Naive thymus-derived CD4-positive, alpha-beta T cell (primary cell): ENCODE measurements at regions of chr7 and their contacts with region 1.

Region 1: GRCh38 chr7:28329661-28330363 is 82.5 kb upstream of the CREB5 start:
- DNase-seq: peak in 7 of 9 donors; percentile 22 to 56 (median 42)
- ATAC-seq: peak; percentile 69
- H3K4me3 ChIP-seq: peak overlapping the region; percentile 15
- H3K4me3 Mint-ChIP-seq: peak overlapping the region; percentile 39 to 90 (median 82)
- H3K27ac ChIP-seq: peak overlapping the region; percentile 55
- H3K27ac Mint-ChIP-seq: peak overlapping the region; percentile 67 to 96 (median 91)
- H3K4me1 ChIP-seq: peaks cover 0 to 36% of the 10 kb centered on the region in 2 donors
- H3K4me1 Mint-ChIP-seq: peaks cover 18 to 47% (median 43%) of the 10 kb centered on the region in 7 donors
- H3K27me3 ChIP-seq: no peaks in the 10 kb centered on the region
- H3K27me3 Mint-ChIP-seq: peaks cover 0 to 4% (median 0%) of the 10 kb centered on the region in 5 donors

Region 2: DNA sequence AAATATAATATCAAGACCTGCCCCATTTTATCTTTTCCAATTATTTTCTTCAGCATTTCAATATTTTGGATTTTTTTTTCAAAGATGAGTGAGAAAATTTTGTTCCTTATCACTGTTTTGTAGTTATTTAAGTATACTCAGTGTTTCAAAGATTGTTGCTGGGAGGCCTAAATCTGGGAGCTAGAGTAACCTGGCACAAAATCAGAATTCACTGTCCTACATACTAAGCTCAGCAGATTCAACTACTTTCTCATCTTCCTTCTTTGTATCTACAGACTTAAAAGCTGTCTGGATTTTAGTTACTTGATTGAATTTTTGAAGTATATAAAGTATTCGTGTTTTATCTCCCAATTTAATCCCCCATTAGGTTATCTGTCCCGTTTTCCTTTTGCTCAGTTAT is 503.9 kb before region 1 on chr7:
- CTCF ChIA-PET with region 1: no interaction called
- POLR2A ChIA-PET with region 1: no interaction called
- intact Hi-C with region 1: no loop called
- DNase-seq: no peak
- ATAC-seq: no peak
- H3K4me3 ChIP-seq: no peak overlapping the region
- H3K4me3 Mint-ChIP-seq: no peak overlapping the region
- H3K27ac ChIP-seq: no peak overlapping the region
- H3K27ac Mint-ChIP-seq: peak overlapping the region in 2 of 9 donors; percentile 7 to 41
- H3K4me1 ChIP-seq: no peaks in the 10 kb centered on the region
- H3K4me1 Mint-ChIP-seq: peaks cover 0 to 4% (median 0%) of the 10 kb centered on the region in 7 donors
- H3K27me3 ChIP-seq: no peaks in the 10 kb centered on the region
- H3K27me3 Mint-ChIP-seq: no peaks in the 10 kb centered on the region

Region 3: GRCh38 chr7:28362812-28363211 is 33.0 kb after region 1 on chr7:
- CTCF ChIA-PET with region 1: no interaction called
- POLR2A ChIA-PET with region 1: no interaction called
- intact Hi-C with region 1: loop called in 1 of 2 experiments (anchors 2 kb)
- DNase-seq: no peak
- ATAC-seq: no peak
- H3K4me3 ChIP-seq: no peak overlapping the region
- H3K4me3 Mint-ChIP-seq: no peak overlapping the region
- H3K27ac ChIP-seq: no peak overlapping the region
- H3K27ac Mint-ChIP-seq: no peak overlapping the region
- H3K4me1 ChIP-seq: no peaks in the 10 kb centered on the region
- H3K4me1 Mint-ChIP-seq: peaks cover 0 to 19% (median 5%) of the 10 kb centered on the region in 7 donors
- H3K27me3 ChIP-seq: no peaks in the 10 kb centered on the region
- H3K27me3 Mint-ChIP-seq: peaks cover 0 to 15% (median 8%) of the 10 kb centered on the region in 5 donors